Spleen (tissue), 13 donors: ENCODE measurements at regions of chr14 and their contacts with region 1.

Region 1: GRCh38 chr14:23320774-23321571 is at the start of gene PABPN1:
- DNase-seq: peak; percentile 98
- H3K4me3 ChIP-seq: peak within 1 kb of the TSS; percentile 61 to 96 (median 85)
- H3K27ac ChIP-seq: peak within 1 kb of the TSS; percentile 93 to 98 (median 96)
- H3K4me1 ChIP-seq: peaks cover 15 to 39% (median 31%) of the 10 kb centered on the region in 6 donors
- H3K27me3 ChIP-seq: no peaks in the 10 kb centered on the region
- CTCF ChIP-seq: peak in 1 of 11 experiments; percentile 16
- POLR2A ChIP-seq: peak in 1 of 3 donors; percentile 68
- total RNA-seq, gene PABPN1: 52.1 to 152 (median 132) TPM

Region 2: DNA sequence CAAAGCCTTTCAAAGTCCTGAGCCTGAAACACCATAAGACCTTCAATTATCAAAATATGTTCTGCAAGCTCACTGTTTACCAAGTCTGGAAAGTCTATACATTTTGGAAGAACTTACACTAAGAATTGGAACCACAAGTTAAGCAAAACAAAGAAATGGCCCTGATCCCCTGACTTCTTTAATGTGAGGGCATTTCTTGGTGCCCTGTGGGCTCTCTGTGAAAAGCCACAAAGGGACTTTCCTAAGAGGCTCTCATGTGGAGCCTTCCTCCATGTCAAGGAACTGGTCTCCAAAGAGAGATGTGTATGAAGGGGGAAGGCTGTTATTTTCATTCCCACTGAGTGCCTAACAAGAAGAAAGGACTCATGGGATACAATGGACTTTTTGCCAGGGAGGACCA is 100.6 kb after region 1 on chr14:
- intact Hi-C with region 1: no loop called
- DNase-seq: no peak
- H3K4me3 ChIP-seq: no peak overlapping the region
- H3K27ac ChIP-seq: no peak overlapping the region
- H3K4me1 ChIP-seq: no peaks in the 10 kb centered on the region
- H3K27me3 ChIP-seq: peaks cover 0 to 29% (median 0%) of the 10 kb centered on the region in 7 donors
- CTCF ChIP-seq: no peak
- POLR2A ChIP-seq: no peak

Region 3: GRCh38 chr14:23469127-23469905 is 148.3 kb after region 1 on chr14 and contains the start of gene NGDN:
- intact Hi-C with region 1: loop called (anchors 10 kb)
- DNase-seq: peak; percentile 95
- H3K4me3 ChIP-seq: peak within 1 kb of the TSS; percentile 83 to 98 (median 96)
- H3K27ac ChIP-seq: peak within 1 kb of the TSS; percentile 65 to 90 (median 81)
- H3K4me1 ChIP-seq: peaks cover 9 to 25% (median 10%) of the 10 kb centered on the region in 6 donors
- H3K27me3 ChIP-seq: no peaks in the 10 kb centered on the region
- CTCF ChIP-seq: peak; percentile 77 to 95 (median 91)
- POLR2A ChIP-seq: peak in 2 of 3 donors; percentile 18 to 58
- total RNA-seq, gene NGDN: 32.7 to 62.7 (median 40.0) TPM

Region 4: GRCh38 chr14:23567192-23568020 is 246.4 kb after region 1 on chr14 and contains the start of gene AP1G2:
- intact Hi-C with region 1: loop called (anchors 10 kb)
- DNase-seq: peak; percentile 98
- H3K4me3 ChIP-seq: peak within 1 kb of the TSS; percentile 56 to 93 (median 67)
- H3K27ac ChIP-seq: peak within 1 kb of the TSS; percentile 74 to 94 (median 86)
- H3K4me1 ChIP-seq: peaks cover 5 to 76% (median 40%) of the 10 kb centered on the region in 6 donors
- H3K27me3 ChIP-seq: peaks cover 0 to 7% (median 0%) of the 10 kb centered on the region in 7 donors
- CTCF ChIP-seq: no peak
- POLR2A ChIP-seq: peak in 1 of 3 donors; percentile 73
- total RNA-seq, gene AP1G2: 139 to 261 (median 193) TPM